PC-9 (cell line): ENCODE measurements at regions of chr1 and their contacts with region 1.

Region 1: GRCh38 chr1:228486596-228487335 is 416 bp upstream of the RNF187 start:
- DNase-seq: peak; percentile 80 to 94
- H3K4me3 ChIP-seq: peak overlapping the region; percentile 96
- H3K27ac ChIP-seq: peak overlapping the region; percentile 76
- H3K4me1 ChIP-seq: peaks cover 34% of the 10 kb centered on the region
- H3K27me3 ChIP-seq: no peaks in the 10 kb centered on the region
- CTCF ChIP-seq: no peak

Region 2: DNA sequence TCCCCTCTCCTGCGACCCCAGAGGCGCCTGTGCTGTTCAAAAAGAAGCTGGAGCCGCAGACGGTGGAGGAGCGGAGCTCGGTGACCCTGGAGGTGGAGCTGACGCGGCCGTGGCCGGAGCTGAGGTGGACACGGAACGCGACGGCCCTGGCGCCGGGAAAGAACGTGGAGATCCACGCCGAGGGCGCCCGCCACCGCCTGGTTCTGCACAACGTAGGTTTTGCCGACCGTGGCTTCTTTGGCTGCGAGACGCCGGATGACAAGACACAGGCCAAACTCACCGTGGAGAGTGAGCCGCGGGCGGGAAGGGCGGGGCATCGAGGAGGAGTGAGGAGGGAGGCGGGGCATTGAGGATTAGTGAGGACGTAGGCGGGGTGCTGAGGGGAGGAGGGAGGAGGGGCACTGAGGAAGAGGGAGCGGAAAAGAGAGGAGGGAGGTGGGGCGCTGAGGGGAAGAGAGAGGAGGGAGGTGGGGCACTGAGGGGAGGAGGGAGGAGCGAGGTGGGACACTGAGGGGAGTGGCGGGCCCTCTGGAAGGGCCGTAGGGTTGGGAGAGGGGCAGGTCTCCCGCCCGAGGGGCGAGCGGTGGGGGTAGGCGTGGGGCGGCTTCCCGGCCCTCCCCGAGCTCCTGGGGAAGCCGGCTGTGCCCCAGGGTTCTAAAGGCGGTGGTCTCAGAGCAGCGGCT is 210.9 kb before region 1 on chr1:
- CTCF ChIA-PET with region 1: no interaction called
- POLR2A ChIA-PET with region 1: no interaction called
- intact Hi-C with region 1: no loop called
- DNase-seq: no peak
- H3K4me3 ChIP-seq: no peak overlapping the region
- H3K27ac ChIP-seq: no peak overlapping the region
- H3K4me1 ChIP-seq: no peaks in the 10 kb centered on the region
- H3K27me3 ChIP-seq: no peaks in the 10 kb centered on the region
- CTCF ChIP-seq: no peak

Region 3: DNA sequence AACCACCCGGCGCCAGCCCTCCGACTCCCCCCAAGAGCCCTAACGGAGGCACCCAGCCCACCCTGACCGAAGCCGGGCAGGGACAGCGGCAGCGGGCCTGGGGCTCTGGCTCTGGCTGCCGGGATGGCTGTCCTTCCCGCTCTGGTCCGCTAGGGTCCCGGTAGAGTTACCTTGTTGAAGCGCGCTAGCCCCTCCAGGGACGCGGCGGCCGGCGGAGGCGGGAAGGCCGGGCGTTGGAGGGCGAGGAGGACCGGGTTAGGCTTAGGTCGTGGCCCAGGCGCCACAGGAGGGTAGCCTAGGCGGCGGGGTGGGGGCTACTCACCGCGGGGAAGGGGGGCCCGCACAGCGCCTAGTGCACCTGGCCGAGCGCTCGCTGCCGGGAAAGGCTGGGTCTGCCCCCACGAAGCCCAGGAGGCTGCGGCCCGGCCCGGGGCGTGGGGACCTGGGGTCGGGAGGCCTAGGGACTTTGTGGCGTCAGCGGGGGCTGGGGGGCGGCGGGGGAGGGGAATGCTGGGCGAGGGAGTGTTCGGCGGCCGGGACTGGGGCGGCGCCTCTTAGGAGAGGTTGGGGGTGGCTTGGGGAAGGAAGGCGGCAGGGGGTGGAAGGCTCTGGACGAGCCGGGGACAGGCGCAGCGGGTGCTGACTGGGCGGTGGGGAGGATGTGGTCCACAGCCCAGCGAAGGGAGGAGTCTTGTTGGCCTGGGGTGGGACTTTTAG is 70.4 kb before region 1 on chr1 and contains the start of gene TRIM17:
- CTCF ChIA-PET with region 1: interaction called, 3 read pairs
- POLR2A ChIA-PET with region 1: no interaction called
- intact Hi-C with region 1: loop called (anchors 1 kb)
- DNase-seq: peak in 1 of 2 experiments; percentile 79
- H3K4me3 ChIP-seq: peak within 1 kb of the TSS; percentile 64
- H3K27ac ChIP-seq: peak within 1 kb of the TSS; percentile 93
- H3K4me1 ChIP-seq: peaks cover 67% of the 10 kb centered on the region
- H3K27me3 ChIP-seq: no peaks in the 10 kb centered on the region
- CTCF ChIP-seq: peak; percentile 63
- total RNA-seq, gene TRIM17: 47.4 and 55.5 TPM in 2 replicates

Region 4: GRCh38 chr1:228457396-228458176 is 29.2 kb before region 1 on chr1:
- CTCF ChIA-PET with region 1: no interaction called
- POLR2A ChIA-PET with region 1: interaction called, 10 read pairs
- intact Hi-C with region 1: loop called (anchors 2 kb)
- DNase-seq: peak; percentile 68 to 78
- H3K4me3 ChIP-seq: peak overlapping the region; percentile 55
- H3K27ac ChIP-seq: peak overlapping the region; percentile 49
- H3K4me1 ChIP-seq: peaks cover 20% of the 10 kb centered on the region
- H3K27me3 ChIP-seq: no peaks in the 10 kb centered on the region
- CTCF ChIP-seq: 0 out of 2 replicates have a peak, but pooled peaks have one; percentile 21

Region 5: GRCh38 chr1:228463559-228464455 is 23.0 kb before region 1 on chr1:
- CTCF ChIA-PET with region 1: no interaction called
- POLR2A ChIA-PET with region 1: no interaction called
- intact Hi-C with region 1: loop called (anchors 2 kb)
- DNase-seq: peak in 1 of 2 experiments; percentile 48
- H3K4me3 ChIP-seq: no peak overlapping the region; the same call in 1 of the 2 replicates
- H3K27ac ChIP-seq: no peak overlapping the region
- H3K4me1 ChIP-seq: no peaks in the 10 kb centered on the region
- H3K27me3 ChIP-seq: peaks cover 23% of the 10 kb centered on the region; the same call in 1 of the 2 replicates
- CTCF ChIP-seq: no peak

Region 6: DNA sequence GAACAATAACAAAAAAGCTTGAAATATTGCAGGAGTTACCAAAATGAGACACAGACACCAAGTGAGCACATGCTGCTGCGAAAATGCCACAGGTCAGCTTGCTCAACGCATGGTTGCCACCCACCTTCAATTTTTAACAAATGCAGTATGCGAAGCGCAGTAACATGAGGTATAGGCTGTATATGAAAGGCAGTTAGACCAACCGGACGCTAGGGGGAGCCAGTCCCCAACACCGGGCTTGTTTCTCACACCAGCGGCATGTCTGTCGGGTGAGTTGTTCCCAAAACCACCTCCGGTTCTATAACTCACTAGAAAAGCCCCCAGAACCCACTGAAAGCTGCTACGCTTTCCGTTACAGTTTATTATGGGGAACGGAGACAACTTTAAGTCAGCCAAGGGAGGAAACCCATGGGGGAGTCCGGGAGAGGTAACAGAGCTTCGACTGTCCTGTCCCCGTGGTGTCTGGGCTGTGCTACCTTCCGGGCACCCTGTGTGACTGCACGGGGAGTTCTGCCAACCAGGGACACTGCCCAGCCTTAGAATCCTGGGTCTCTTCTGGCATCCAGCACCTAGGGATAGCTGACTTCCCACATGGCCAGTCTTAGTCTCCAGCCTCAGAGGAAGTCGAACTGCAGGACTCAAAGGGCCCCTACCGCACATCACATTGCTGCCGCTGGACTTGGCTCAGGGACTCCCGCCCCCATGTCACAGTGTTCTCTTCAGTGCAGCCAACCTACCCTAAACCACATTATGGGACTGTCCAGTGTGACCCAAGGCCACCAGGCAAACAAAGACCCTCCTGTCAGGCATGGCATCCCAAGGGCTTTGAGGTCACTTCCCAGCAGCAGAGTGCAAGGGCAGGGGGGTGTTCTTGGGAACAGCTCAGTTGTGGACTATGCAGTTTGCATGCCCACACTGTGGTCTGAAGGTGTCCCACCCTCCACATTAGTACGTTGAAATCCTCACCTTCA is 14.4 kb after region 1 on chr1:
- CTCF ChIA-PET with region 1: interaction called, 10 read pairs
- POLR2A ChIA-PET with region 1: no interaction called
- intact Hi-C with region 1: no loop called
- DNase-seq: peak; percentile 46 to 82
- H3K4me3 ChIP-seq: no peak overlapping the region
- H3K27ac ChIP-seq: no peak overlapping the region
- H3K4me1 ChIP-seq: no peaks in the 10 kb centered on the region
- H3K27me3 ChIP-seq: no peaks in the 10 kb centered on the region
- CTCF ChIP-seq: peak; percentile 94